Breast epithelium (tissue), 4 donors: ENCODE measurements at regions of chr21 and their contacts with region 1.

Region 1: DNA sequence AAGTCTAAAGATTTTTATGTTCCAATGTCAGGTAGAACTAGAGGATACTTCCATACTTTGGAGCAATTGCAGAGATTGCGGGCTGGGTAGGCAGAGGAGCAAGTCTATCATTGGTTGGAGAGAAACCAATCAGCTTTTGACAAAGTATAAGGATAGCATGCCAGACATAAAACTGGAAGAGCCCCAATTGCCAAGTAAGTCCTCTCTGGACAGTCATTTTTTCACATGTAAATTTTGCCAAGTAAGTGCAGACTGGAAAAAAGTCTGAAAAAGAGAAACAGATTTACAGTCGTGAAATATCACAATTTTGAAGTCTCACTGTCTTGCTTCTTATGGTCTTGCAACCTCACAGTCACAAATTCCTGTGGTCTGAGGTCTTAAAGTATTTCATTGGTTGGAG is 131.4 kb upstream of the C21orf91 start:
- DNase-seq: no peak
- H3K4me3 ChIP-seq: no peak overlapping the region
- H3K27ac ChIP-seq: no peak overlapping the region
- H3K4me1 ChIP-seq: no peaks in the 10 kb centered on the region
- H3K27me3 ChIP-seq: no peaks in the 10 kb centered on the region
- CTCF ChIP-seq: no peak
- POLR2A ChIP-seq: no peak

Region 2: GRCh38 chr21:17964716-17965115 is 14.1 kb after region 1 on chr21:
- intact Hi-C with region 1: no loop called
- DNase-seq: no peak
- H3K4me3 ChIP-seq: no peak overlapping the region
- H3K27ac ChIP-seq: no peak overlapping the region
- H3K4me1 ChIP-seq: no peaks in the 10 kb centered on the region
- H3K27me3 ChIP-seq: no peaks in the 10 kb centered on the region
- CTCF ChIP-seq: no peak
- POLR2A ChIP-seq: no peak

Region 3: DNA sequence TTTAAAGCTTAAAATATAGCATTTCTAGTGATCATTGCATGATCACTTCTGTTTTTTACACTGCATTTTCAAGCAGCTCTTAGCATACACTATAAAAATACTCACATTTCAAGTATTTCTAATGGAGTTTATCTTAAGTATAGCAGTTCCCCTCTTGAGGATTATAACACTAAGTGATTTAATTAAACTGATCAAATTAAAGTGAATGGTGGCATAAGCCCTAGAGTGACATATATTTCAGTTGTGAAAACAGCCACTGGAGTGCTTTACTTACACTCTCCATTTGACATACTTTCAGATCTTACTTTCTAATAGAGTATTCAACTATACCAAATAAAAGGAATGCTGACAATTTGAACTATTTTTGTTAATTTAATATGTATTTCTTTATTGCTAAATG is 1076.3 kb after region 1 on chr21:
- intact Hi-C with region 1: loop called (anchors 10 kb)
- DNase-seq: no peak
- H3K4me3 ChIP-seq: no peak overlapping the region
- H3K27ac ChIP-seq: no peak overlapping the region
- H3K4me1 ChIP-seq: no peaks in the 10 kb centered on the region
- H3K27me3 ChIP-seq: no peaks in the 10 kb centered on the region
- CTCF ChIP-seq: no peak
- POLR2A ChIP-seq: no peak